ENCODE measurements at regions of chr19 and their contacts with region 1.

Region 1: DNA sequence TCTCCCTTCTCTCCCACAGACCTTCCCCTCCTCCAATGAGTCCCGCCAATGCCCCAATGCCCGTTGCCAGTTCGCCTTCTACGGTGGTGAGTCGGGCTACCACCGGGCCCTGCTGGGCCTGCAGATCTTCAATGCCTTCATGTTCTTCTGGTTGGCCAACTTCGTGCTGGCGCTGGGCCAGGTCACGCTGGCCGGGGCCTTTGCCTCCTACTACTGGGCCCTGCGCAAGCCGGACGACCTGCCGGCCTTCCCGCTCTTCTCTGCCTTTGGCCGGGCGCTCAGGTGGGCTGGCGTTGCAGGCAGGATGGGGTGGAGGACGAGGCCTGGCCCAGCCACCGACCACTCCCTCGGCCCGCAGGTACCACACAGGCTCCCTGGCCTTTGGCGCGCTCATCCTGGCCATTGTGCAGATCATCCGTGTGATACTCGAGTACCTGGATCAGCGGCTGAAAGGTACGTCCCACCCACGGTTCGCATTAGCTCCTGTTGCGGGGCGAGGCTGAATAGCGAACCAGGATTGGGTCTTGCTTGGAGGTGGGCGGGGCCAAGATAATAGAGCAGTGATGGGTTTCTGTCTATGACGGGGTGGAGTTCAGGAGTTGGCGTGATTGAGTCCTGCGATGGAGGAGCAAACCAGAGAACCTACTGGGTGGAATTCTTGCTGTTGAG is 11.1 kb downstream of the SLC44A2 start:
- DNase-seq: no peak
- ATAC-seq: no peak
- H3K4me3 ChIP-seq: no peak overlapping the region
- H3K27ac ChIP-seq: no peak overlapping the region
- H3K4me1 ChIP-seq: peaks cover 6% of the 10 kb centered on the region
- H3K27me3 ChIP-seq: no peaks in the 10 kb centered on the region
- CTCF ChIP-seq: no peak
- EP300 ChIP-seq: no peak
- POLR2A ChIP-seq: no peak
- RAD21 ChIP-seq: no peak

Region 2: GRCh38 chr19:10602330-10603083 is 33.9 kb before region 1 on chr19:
- CTCF ChIA-PET with region 1: interaction called, 10 read pairs
- POLR2A ChIA-PET with region 1: interaction called, 15 read pairs
- RAD21 ChIA-PET with region 1: interaction called, 11 read pairs
- SMC1A ChIA-PET with region 1: interaction called, 10 read pairs
- in situ Hi-C with region 1: no loop called
- intact Hi-C with region 1: loop called (anchors 5 kb)
- DNase-seq: no peak
- ATAC-seq: peak; percentile 81
- H3K4me3 ChIP-seq: peak overlapping the region; percentile 98
- H3K27ac ChIP-seq: peak overlapping the region; percentile 98
- H3K4me1 ChIP-seq: peaks cover 20% of the 10 kb centered on the region
- H3K27me3 ChIP-seq: no peaks in the 10 kb centered on the region
- CTCF ChIP-seq: no peak
- EP300 ChIP-seq: no peak
- POLR2A ChIP-seq: peak; percentile 73
- RAD21 ChIP-seq: no peak

Region 3: DNA sequence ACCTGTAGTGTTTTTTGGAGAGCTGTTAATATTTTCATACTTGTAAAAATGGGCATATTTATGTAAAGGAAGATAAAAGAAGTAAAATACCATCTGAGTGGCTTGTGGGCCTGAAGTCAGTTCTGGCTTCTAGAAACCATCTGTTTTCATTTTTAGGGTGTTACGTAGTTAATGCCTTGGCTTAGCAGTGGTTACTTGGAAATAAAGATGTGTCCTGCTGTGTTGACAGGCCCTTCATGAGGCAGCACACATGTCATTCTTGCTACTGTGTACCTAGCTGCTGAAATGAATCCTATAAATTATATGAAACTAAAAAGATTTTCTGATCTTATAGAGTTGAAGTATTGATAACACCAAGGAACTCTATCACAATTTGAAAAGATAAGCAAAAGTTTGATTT is 33.7 kb after region 1 on chr19:
- CTCF ChIA-PET with region 1: no interaction called
- POLR2A ChIA-PET with region 1: interaction called, 10 read pairs
- RAD21 ChIA-PET with region 1: no interaction called
- SMC1A ChIA-PET with region 1: no interaction called
- in situ Hi-C with region 1: no loop called
- intact Hi-C with region 1: no loop called
- DNase-seq: no peak
- ATAC-seq: no peak
- H3K4me3 ChIP-seq: no peak overlapping the region
- H3K27ac ChIP-seq: no peak overlapping the region
- H3K4me1 ChIP-seq: peaks cover 14% of the 10 kb centered on the region
- H3K27me3 ChIP-seq: no peaks in the 10 kb centered on the region
- CTCF ChIP-seq: no peak
- EP300 ChIP-seq: no peak
- POLR2A ChIP-seq: no peak
- RAD21 ChIP-seq: no peak

Measured in GM12878 (cell line).